ENCODE measurements at regions of chr16 and their contacts with region 1.

Region 1: DNA sequence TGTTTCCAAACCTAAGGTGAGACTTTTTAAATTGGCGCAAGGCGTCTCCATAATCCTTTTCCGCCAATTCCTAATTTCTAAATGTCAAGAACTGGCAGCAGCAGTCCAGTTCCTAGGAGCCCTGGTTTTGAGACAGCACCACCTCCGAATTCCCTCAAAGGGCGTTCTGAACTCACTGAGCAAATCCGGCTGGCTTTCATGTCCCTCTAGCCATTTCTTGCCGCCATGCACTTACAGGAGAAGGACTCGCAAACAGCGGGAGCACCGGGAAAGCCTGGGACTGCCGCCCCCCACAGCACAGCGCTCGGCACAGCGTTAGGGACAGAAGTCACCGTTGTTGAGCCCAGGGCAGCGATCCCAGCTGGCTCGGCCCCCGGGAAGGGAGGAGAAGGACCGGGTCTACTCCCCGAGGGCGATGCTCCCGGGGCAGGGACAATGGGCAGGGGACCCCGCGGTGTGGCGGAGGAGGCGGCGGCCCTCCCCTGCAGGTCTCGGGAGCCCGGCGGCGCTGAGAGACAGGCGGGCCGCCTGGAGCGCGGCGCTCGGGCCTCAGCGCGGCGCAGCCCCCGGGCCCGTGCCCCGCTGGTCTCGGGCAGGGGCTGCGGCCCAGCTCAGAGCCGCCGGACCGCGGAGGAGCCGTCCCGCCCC is 545 bp downstream of the ARHGAP17 start:
- DNase-seq: peak; percentile 77
- H3K4me3 ChIP-seq: peak overlapping the region; percentile 76 to 89 (median 86)
- H3K27ac ChIP-seq: peak overlapping the region; percentile 93 to 98 (median 96)
- H3K4me1 ChIP-seq: peaks cover 0 to 54% (median 46%) of the 10 kb centered on the region in 4 donors
- H3K27me3 ChIP-seq: no peaks in the 10 kb centered on the region
- CTCF ChIP-seq: no peak
- EP300 ChIP-seq: no peak
- POLR2A ChIP-seq: no peak

Region 2: DNA sequence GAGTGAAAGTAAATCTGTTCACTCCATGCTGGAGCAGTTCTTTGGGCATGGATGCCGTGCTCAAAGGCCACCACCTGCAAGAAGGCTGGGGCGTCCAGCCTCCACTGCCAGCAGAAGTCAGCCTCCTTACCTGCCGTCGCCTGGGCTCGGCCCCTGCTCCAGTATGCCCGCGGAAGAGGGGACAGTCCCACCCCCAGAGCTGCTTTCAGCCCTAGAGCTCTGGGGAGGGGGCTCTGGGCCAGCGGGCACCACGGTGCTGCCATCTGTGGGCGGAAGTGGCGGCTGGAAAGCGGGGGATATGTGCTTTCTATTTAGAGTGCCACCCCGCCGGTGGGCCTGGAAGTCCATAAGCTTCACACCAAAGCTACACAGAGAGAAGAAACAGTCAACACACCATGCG is 75.4 kb before region 1 on chr16:
- intact Hi-C with region 1: no loop called
- DNase-seq: no peak
- H3K4me3 ChIP-seq: no peak overlapping the region
- H3K27ac ChIP-seq: no peak overlapping the region
- H3K4me1 ChIP-seq: peaks cover 0 to 9% (median 2%) of the 10 kb centered on the region in 4 donors
- H3K27me3 ChIP-seq: no peaks in the 10 kb centered on the region
- CTCF ChIP-seq: no peak
- EP300 ChIP-seq: no peak
- POLR2A ChIP-seq: no peak

Region 3: DNA sequence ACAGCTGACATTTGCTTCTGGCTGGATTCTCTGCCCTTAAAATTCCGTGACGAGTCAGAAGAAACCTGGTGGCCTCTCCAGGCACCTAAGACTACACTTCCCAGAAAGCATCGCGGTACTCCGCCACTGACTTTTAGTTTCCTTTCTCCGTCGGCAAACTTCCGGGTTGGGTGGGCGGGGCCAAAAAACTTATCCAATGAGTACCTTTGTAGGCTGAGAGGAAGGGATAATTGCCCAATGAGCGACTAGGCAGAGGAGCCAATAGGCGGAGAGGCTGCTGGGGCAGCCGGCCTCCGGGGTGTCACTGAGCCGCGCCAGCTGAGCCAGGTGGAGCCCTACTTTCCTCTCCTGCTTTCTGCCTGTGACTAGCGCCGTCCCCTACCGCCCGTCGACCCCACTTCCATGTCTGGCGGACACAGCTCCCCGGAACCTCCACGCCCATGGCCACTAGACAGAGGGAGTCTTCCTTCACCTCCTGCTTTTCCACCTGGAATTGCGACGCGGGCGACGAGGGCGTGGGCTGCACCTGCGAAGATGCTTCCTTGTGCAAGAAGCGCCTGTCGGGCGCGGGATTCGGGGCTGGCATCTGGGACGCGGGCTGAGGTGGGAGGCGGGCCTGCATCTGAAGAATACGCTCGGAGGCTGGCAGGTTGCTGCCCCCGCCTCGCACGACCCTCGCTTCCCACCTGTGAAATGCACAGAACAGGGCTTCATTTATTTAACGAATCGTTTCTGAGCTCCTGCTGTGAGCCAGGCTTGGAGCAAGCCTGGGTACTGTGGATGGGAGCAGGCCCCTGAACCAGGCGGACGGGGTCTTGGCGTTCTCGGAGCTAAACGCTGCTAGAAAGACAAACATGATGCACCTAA is 17.1 kb after region 1 on chr16:
- intact Hi-C with region 1: loop called (anchors 2 kb)
- DNase-seq: peak; percentile 96
- H3K4me3 ChIP-seq: peak overlapping the region; percentile 76 to 93 (median 86)
- H3K27ac ChIP-seq: peak overlapping the region; percentile 72 to 78 (median 74)
- H3K4me1 ChIP-seq: peaks cover 0 to 20% (median 14%) of the 10 kb centered on the region in 4 donors
- H3K27me3 ChIP-seq: no peaks in the 10 kb centered on the region
- CTCF ChIP-seq: no peak
- EP300 ChIP-seq: no peak
- POLR2A ChIP-seq: peak; percentile 42 to 48

Region 4: DNA sequence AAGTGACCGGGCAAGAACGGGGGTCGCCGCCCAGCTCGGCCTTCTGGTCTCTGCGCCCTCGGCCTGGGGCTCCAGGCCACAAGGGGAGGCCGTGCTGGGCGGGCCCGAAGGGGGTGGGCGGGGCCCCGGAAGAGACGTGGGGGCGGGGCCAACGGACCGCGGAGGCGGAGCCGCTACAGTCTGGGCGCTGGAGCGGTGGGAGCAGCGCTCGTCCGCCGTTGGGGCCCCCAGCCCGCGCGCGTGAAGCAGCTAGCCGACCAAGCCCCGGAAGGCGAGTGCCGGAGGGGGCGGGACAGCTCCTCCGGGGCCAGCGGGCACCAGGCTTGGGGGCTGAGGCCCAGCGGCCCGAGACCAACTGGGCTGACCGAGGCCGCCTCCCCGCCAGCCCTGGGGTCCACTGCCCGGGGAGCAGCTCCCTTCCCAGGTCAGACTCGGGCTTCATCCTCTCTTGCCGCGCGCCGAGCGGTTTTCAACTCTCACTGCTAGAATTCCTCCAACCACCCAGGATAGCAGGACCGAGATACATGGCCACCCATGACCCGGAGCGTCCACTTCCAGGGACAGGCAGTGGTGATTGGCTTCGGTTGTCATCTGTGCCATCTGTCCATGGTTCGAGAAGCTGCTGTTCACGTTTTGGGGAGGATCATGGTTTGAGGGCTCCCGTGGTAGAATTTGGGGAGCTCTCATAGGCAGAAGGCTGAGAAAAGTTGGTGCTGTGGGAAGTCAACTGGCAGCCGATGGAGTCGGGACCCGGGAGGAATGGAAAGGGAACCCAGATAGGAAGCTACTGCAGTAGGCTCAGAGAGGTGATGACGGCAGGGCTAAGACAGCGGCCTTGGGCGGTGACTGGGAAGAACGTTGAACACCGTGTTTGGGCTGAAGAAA is 52.4 kb after region 1 on chr16:
- intact Hi-C with region 1: loop called (anchors 5 kb)
- DNase-seq: peak; percentile 90
- H3K4me3 ChIP-seq: peak overlapping the region; percentile 71 to 87 (median 82)
- H3K27ac ChIP-seq: peak overlapping the region; percentile 94 to 96 (median 94)
- H3K4me1 ChIP-seq: peaks cover 0 to 16% (median 13%) of the 10 kb centered on the region in 4 donors
- H3K27me3 ChIP-seq: no peaks in the 10 kb centered on the region
- CTCF ChIP-seq: no peak
- EP300 ChIP-seq: no peak
- POLR2A ChIP-seq: peak; percentile 51 to 69

Region 5: DNA sequence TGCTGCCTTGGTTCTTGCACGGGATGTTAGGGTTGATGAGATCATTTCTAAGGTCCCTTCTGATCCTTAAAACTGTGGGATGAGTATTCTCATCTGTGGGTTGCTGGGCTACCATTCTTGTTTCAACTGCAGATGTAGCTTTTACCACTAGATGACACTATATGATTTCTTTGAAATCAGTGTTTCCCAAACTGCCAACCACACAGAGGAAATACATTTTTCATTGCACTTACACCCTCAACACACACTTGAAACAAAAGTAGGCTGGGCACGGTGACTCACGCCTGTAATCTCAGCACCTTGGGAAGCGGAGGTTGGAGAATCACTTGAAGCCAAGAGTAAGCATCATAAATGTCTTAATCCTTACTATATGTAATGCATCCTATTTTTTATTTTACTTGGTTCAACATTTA is 112.2 kb after region 1 on chr16:
- intact Hi-C with region 1: no loop called
- DNase-seq: no peak
- H3K4me3 ChIP-seq: no peak overlapping the region
- H3K27ac ChIP-seq: peak overlapping the region in 1 of 4 donors; percentile 10
- H3K4me1 ChIP-seq: peaks cover 0 to 11% (median 7%) of the 10 kb centered on the region in 4 donors
- H3K27me3 ChIP-seq: no peaks in the 10 kb centered on the region
- CTCF ChIP-seq: peak in 3 of 4 experiments; percentile 41 to 56 (median 52)
- EP300 ChIP-seq: no peak
- POLR2A ChIP-seq: no peak

Measured in sigmoid colon (tissue), 7 donors.